ENCODE measurements at regions of chr18 and their contacts with region 1.

Region 1: DNA sequence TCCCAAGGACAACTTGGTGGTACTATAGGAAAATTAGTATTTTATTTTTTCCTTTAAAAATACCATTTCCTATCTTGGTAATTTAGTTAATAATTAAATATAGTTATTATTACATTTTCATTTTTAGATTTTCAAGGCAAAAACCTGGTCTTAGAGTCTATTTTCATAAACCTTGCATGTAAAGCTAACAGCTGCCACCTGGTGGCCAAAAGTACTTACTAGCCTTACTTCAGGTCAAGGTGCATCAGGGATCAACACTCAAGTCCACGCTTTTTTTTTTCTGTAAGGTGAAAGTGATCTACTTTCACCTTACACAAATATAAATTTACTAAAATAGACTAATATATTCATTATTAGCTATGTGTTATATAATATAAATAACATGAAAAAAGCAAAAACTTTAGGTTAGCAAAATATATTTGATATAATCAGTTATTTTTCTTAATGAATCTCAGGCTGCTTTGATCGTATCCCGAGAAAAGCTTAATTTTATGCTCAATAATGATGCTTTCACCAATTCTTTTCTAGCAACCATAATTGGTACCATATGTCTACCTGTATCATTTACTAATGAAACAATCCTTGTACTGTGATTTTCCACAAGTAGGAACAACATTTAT is 62.5 kb downstream of the RELCH start:
- DNase-seq: peak; percentile 19
- H3K4me3 ChIP-seq: no peak overlapping the region
- CTCF ChIP-seq: peak; percentile 76

Region 2: DNA sequence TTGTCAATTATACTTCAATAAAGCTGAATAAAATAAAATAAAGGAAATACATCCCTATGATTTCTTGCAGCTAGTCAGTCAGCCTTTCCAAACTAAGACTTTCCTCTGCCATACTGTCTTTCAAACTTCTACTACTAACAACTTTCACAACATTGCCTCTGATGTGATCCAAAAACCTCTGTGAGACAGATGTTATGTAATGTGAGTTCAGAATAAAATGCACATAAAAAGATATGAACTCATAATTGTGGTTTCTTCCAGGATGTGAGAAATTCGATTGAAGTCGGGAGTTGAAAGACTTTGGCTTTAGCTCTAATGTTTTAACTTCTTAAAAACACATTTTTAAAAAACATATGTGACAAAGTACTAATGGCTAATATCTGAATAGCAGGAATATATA is 161.4 kb before region 1 on chr18:
- CTCF ChIA-PET with region 1: no interaction called
- POLR2A ChIA-PET with region 1: no interaction called
- DNase-seq: no peak
- H3K4me3 ChIP-seq: no peak overlapping the region
- CTCF ChIP-seq: no peak

Region 3: GRCh38 chr18:62165583-62165982 is 84.0 kb before region 1 on chr18:
- CTCF ChIA-PET with region 1: interaction called, 10 read pairs
- POLR2A ChIA-PET with region 1: no interaction called
- DNase-seq: no peak
- H3K4me3 ChIP-seq: no peak overlapping the region
- CTCF ChIP-seq: no peak

Region 4: GRCh38 chr18:62186774-62187542 is 62.6 kb before region 1 on chr18 and contains the starts of genes PIGN and RELCH:
- CTCF ChIA-PET with region 1: interaction called, 111 read pairs
- POLR2A ChIA-PET with region 1: no interaction called
- DNase-seq: peak; percentile 85
- H3K4me3 ChIP-seq: peak within 1 kb of the TSS; percentile 98
- CTCF ChIP-seq: no peak

Region 5: DNA sequence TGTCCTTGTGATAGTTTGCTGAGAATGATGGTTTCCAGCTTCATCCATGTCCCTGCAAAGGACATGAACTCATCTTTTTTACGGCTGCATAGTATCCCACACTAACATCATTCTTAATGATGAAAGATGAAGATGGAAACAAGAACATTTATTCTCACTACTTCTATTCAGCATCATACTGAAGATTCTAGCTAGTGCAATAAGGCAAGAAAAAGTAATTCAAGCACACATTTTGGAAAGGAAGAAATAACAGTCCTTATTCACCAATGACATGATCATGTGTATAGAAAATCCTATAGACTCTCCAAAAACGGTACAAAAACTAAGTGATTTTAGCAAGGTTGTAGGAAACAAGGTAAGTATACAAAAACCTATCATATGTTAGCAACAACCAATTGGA is 25.4 kb before region 1 on chr18:
- CTCF ChIA-PET with region 1: interaction called, 10 read pairs
- POLR2A ChIA-PET with region 1: no interaction called
- DNase-seq: no peak
- H3K4me3 ChIP-seq: no peak overlapping the region
- CTCF ChIP-seq: no peak

Region 6: DNA sequence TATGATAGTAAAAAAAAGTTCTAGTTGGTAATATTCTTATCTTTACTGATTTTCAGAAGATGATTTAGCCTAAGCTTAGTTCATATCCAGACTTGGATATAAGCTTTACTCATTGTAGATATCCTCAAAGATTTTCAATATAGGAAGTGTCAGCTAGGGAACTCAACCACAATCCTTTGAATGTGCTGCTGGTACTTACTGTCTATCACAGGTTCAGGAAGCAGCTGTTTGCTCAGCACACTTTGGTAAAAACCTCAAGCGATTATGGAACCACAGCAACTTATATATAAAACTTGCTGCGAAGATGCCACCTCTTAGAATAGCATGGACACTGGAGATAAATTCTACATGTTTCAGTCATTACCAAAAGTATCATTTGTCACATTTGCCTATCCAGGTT is 15.4 kb after region 1 on chr18:
- CTCF ChIA-PET with region 1: interaction called, 28 read pairs
- POLR2A ChIA-PET with region 1: no interaction called
- DNase-seq: no peak
- H3K4me3 ChIP-seq: no peak overlapping the region
- CTCF ChIP-seq: no peak